Activated T-helper 1 cell treated with anti-CD3 and anti-CD28 coated beads, Interleukin-12 subunit alpha, Interleukin-12 subunit beta, Interleukin-2, Interleukin-4 antibody, amounts not matched to agents 30 ng/mL and 10 ng/mL and 1 ng/mL, durations not matched to agents 14 hours and 24 hours and 36 hours (primary cell): ENCODE measurements at regions of chrX and their contacts with region 1.

Region 1: GRCh38 chrX:31337332-31337731 is 265.5 kb upstream of the FTHL17 start:
- DNase-seq: no peak
- H3K4me3 Mint-ChIP-seq: no peak overlapping the region
- H3K27ac Mint-ChIP-seq: no peak overlapping the region
- H3K4me1 Mint-ChIP-seq: no peaks in the 10 kb centered on the region
- H3K27me3 Mint-ChIP-seq: no peaks in the 10 kb centered on the region

Region 2: DNA sequence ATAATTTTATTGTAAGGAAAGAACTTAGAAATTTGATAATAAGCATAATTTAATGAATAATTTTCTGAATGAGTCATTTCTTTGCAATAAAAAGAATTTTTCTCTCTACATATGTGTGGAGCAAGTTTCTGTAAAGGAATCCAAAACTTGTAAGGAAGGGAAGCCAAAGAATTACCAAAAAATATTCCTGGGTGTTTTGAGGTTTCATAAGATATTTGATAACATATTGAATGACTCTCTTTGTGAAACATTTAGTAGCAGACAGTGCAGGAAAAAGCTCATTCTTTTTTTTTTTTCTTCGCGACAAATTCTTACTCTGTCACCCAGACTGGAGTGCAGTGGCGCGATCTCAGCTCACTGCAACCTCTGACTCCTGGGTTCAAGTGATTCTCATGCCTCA is 1591.0 kb before region 1 on chrX:
- intact Hi-C with region 1: no loop called
- DNase-seq: no peak
- H3K4me3 Mint-ChIP-seq: no peak overlapping the region
- H3K27ac Mint-ChIP-seq: no peak overlapping the region
- H3K4me1 Mint-ChIP-seq: no peaks in the 10 kb centered on the region
- H3K27me3 Mint-ChIP-seq: no peaks in the 10 kb centered on the region

Region 3: DNA sequence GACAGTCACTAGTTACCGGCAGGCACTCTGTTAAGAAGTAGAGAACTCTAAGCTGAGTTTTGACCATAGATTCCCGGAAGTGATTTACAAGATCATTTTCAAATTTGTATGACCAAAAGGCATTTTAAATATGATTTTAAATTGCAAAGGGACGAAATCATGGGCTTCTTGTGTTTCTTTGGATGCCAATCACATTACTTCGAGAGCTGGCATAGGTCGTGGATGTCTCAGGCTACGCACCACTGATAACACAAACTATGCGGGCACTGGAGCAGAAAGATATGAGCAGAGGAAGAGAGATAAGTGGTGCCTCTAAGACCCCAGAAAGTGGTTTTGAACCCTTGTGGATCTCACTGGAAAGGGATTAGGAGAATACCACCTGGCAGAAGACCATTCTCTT is 28.7 kb after region 1 on chrX:
- intact Hi-C with region 1: loop called (anchors 1 kb)
- DNase-seq: no peak
- H3K4me3 Mint-ChIP-seq: no peak overlapping the region
- H3K27ac Mint-ChIP-seq: no peak overlapping the region
- H3K4me1 Mint-ChIP-seq: no peaks in the 10 kb centered on the region
- H3K27me3 Mint-ChIP-seq: peaks cover 3% of the 10 kb centered on the region